ENCODE measurements at regions of chr4 and their contacts with region 1.

Region 1: DNA sequence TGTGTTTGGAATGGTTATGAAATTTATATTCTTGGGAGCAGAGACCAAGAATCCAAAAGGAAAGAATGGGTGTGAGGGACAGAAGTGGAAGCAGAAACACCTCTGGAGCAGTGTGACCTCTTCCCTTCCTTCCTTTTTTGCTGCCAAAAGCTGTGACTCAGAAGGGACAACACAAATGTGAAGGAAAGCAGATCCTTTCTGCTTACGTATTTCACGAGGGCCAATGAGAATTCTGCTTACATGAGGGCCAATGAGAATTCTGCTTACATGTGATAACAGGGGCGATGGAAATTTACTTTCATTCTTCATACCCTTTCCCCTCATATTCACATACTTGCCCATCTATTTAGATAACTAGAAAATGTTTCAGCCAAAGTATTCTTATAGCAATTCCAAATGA is 404.6 kb downstream of the PRDM5 start:
- DNase-seq: peak; percentile 99
- H3K4me3 ChIP-seq: peak overlapping the region in 1 of 3 experiments; percentile 64
- H3K27ac ChIP-seq: peak overlapping the region; percentile 52
- H3K4me1 ChIP-seq: peaks cover 9% of the 10 kb centered on the region
- H3K27me3 ChIP-seq: no peaks in the 10 kb centered on the region
- CTCF ChIP-seq: no peak
- POLR2A ChIP-seq: no peak

Region 2: DNA sequence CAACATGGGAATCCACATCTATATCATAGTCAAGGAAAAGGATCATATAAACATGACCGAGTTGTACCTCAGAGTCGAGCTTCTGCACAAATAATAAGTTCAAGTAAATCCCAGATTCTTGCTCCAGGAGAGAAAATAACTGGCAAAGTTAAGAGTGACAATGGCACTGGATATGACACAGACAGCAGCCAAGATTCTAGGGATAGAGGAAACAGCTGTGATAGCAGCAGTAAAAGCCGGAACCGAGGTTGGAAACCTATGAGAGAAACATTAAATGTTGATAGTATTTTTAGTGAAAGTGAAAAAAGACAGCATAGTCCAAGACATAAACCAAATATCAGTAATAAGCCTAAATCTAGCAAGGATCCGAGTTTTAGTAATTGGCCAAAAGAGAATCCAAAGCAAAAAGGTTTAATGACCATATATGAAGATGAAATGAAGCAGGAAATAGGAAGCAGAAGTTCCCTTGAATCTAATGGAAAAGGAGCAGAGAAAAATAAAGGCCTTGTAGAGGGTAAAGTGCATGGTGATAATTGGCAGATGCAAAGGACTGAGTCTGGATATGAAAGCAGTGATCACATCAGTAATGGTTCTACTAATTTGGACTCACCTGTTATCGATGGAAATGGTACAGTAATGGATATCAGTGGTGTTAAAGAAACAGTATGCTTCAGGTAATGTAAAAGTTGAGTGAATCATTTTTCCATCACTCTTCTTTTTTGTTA is 1246.4 kb before region 1 on chr4:
- CTCF ChIA-PET with region 1: no interaction called
- POLR2A ChIA-PET with region 1: no interaction called
- dilution Hi-C with region 1: no loop called
- intact Hi-C with region 1: loop called (anchors 10 kb)
- DNase-seq: peak; percentile 82
- H3K4me3 ChIP-seq: no peak overlapping the region
- H3K27ac ChIP-seq: peak overlapping the region; percentile 38
- H3K4me1 ChIP-seq: peaks cover 13% of the 10 kb centered on the region
- H3K27me3 ChIP-seq: no peaks in the 10 kb centered on the region
- CTCF ChIP-seq: no peak
- POLR2A ChIP-seq: no peak

Region 3: DNA sequence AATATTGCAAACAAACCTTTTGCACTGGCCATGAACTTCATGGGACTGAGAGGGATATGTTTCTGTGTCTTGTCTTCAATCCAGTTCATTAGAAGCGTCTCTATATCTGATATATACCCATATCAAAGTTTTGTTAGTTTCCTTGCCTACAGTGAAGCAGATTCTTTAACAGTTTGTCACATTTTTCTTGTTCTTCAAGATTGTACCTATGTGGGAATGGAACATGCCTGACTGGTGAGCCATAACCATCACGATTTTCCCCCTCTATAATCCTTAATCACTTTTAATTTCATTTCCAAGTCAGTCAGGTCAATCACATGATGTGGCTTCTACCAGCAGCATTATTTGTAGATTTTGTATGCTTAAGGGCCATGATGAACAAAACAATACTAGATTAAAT is 692.3 kb before region 1 on chr4:
- CTCF ChIA-PET with region 1: no interaction called
- POLR2A ChIA-PET with region 1: no interaction called
- dilution Hi-C with region 1: no loop called
- intact Hi-C with region 1: no loop called
- DNase-seq: no peak
- H3K4me3 ChIP-seq: no peak overlapping the region
- H3K27ac ChIP-seq: no peak overlapping the region
- H3K4me1 ChIP-seq: no peaks in the 10 kb centered on the region
- H3K27me3 ChIP-seq: no peaks in the 10 kb centered on the region
- CTCF ChIP-seq: no peak
- POLR2A ChIP-seq: no peak

Region 4: DNA sequence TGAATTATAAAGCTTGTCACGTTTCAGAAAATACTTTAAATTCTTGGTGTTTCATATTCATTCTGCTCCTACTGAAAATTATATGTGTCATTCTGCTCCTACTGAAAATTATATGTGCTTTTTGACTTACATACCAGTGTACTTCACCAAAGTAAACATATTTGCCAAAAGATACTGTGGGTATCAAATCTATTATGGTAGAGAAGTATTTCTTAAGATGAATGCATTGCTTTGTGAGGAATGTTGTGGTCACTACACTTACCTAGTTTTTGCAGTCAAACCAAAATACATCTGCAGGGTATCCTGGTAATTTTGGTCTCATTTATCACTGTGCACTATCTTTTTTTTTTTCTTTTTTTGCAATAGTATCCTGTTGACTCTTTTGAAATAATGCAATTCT is 163.6 kb before region 1 on chr4:
- CTCF ChIA-PET with region 1: no interaction called
- POLR2A ChIA-PET with region 1: no interaction called
- dilution Hi-C with region 1: no loop called
- intact Hi-C with region 1: no loop called
- DNase-seq: no peak
- H3K4me3 ChIP-seq: no peak overlapping the region
- H3K27ac ChIP-seq: no peak overlapping the region
- H3K4me1 ChIP-seq: no peaks in the 10 kb centered on the region
- H3K27me3 ChIP-seq: no peaks in the 10 kb centered on the region
- CTCF ChIP-seq: no peak
- POLR2A ChIP-seq: no peak

Region 5: GRCh38 chr4:120406960-120407359 is 111.0 kb before region 1 on chr4:
- CTCF ChIA-PET with region 1: no interaction called
- POLR2A ChIA-PET with region 1: no interaction called
- dilution Hi-C with region 1: no loop called
- intact Hi-C with region 1: no loop called
- DNase-seq: no peak
- H3K4me3 ChIP-seq: no peak overlapping the region
- H3K27ac ChIP-seq: no peak overlapping the region
- H3K4me1 ChIP-seq: no peaks in the 10 kb centered on the region
- H3K27me3 ChIP-seq: no peaks in the 10 kb centered on the region
- CTCF ChIP-seq: no peak
- POLR2A ChIP-seq: no peak

Region 6: GRCh38 chr4:120692964-120693363 is 175.0 kb after region 1 on chr4:
- CTCF ChIA-PET with region 1: no interaction called
- POLR2A ChIA-PET with region 1: no interaction called
- dilution Hi-C with region 1: no loop called
- intact Hi-C with region 1: loop called (anchors 5 kb)
- DNase-seq: peak; percentile 90
- H3K4me3 ChIP-seq: no peak overlapping the region
- H3K27ac ChIP-seq: peak overlapping the region; percentile 29
- H3K4me1 ChIP-seq: peaks cover 6% of the 10 kb centered on the region
- H3K27me3 ChIP-seq: no peaks in the 10 kb centered on the region
- CTCF ChIP-seq: no peak
- POLR2A ChIP-seq: no peak

Region 7: GRCh38 chr4:120798570-120798969 is 280.6 kb after region 1 on chr4:
- CTCF ChIA-PET with region 1: interaction called, 3 read pairs
- POLR2A ChIA-PET with region 1: no interaction called
- dilution Hi-C with region 1: no loop called
- intact Hi-C with region 1: loop called (anchors 2 kb)
- DNase-seq: no peak
- H3K4me3 ChIP-seq: no peak overlapping the region
- H3K27ac ChIP-seq: no peak overlapping the region
- H3K4me1 ChIP-seq: no peaks in the 10 kb centered on the region
- H3K27me3 ChIP-seq: no peaks in the 10 kb centered on the region
- CTCF ChIP-seq: no peak
- POLR2A ChIP-seq: no peak

Region 8: GRCh38 chr4:120922381-120923206 is 404.6 kb after region 1 on chr4 and contains the start of gene PRDM5:
- CTCF ChIA-PET with region 1: no interaction called
- POLR2A ChIA-PET with region 1: no interaction called
- dilution Hi-C with region 1: no loop called
- intact Hi-C with region 1: loop called (anchors 1 kb)
- DNase-seq: peak; percentile 52
- H3K4me3 ChIP-seq: peak within 1 kb of the TSS; percentile 10 to 79 (median 68)
- H3K27ac ChIP-seq: peak within 1 kb of the TSS; percentile 49
- H3K4me1 ChIP-seq: peaks cover 5% of the 10 kb centered on the region
- H3K27me3 ChIP-seq: no peaks in the 10 kb centered on the region
- CTCF ChIP-seq: peak in 1 of 2 donors; percentile 34
- POLR2A ChIP-seq: peak; percentile 27
- total RNA-seq, gene PRDM5: 5.7 and 8.1 TPM in 2 replicates

Measured in endothelial cell of umbilical vein (primary cell).